Ascending aorta (tissue), 2 donors: ENCODE measurements at regions of chr1 and their contacts with region 1.

Region 1: GRCh38 chr1:228486596-228487335 is 416 bp upstream of the RNF187 start:
- DNase-seq: peak; percentile 14 to 82
- H3K4me3 ChIP-seq: peak overlapping the region; percentile 76 to 97
- H3K27ac ChIP-seq: peak overlapping the region; percentile 99 to 100
- H3K4me1 ChIP-seq: peaks cover 17 to 28% of the 10 kb centered on the region in 2 donors
- H3K27me3 ChIP-seq: no peaks in the 10 kb centered on the region
- CTCF ChIP-seq: no peak

Region 2: DNA sequence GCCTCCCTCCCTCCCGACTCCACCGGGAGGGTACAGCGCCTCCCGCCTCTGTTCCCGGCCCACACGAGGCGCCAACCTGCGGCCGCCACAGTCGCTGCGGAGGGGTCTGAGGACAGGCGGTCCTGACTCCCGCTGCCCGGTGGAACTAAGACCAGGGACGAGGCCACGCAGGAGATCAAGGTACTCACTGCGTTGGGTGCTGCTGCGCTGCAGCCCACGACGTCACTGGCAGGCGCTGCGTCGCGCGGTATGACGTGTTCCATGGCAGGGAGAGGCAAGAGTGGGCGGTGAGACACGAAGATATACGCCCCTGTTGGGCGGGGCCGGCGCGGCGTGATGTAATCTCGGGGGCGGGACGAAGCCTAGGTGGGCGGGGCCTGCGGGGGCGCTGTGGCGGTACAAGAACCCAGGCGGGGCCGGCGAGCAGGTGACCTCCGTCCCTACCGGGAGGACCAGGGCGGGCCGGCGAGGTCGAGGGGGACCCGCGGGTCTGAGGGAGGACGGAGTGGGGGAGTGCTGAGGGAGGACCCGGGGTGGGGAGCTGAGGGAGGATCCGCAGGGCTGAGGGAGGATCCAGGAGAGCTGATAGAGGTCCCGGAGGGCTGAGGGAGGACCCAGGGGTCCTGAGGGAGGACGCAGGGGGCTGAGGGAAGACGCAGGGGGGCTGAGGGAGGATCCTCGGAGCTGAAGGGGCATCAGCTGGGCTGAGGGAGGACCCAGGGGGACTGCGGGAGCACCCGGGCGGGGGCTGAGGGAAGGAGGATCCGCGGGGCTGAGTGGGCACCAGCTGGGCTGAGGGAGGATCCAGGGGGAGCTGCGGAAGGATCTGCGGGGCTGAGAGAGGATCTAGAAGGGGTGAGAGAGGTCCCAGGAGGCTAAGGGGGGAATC is 377.4 kb before region 1 on chr1 and contains the start of gene MRPL55:
- intact Hi-C with region 1: loop called (anchors 10 kb)
- DNase-seq: peak; percentile 94 to 99
- H3K4me3 ChIP-seq: peak within 1 kb of the TSS; percentile 77 to 97
- H3K27ac ChIP-seq: peak within 1 kb of the TSS; percentile 88 to 89
- H3K4me1 ChIP-seq: peaks cover 14 to 18% of the 10 kb centered on the region in 2 donors
- H3K27me3 ChIP-seq: no peaks in the 10 kb centered on the region
- CTCF ChIP-seq: peak in 1 of 3 experiments; percentile 9
- total RNA-seq, gene MRPL55: 23.6 TPM

Region 3: DNA sequence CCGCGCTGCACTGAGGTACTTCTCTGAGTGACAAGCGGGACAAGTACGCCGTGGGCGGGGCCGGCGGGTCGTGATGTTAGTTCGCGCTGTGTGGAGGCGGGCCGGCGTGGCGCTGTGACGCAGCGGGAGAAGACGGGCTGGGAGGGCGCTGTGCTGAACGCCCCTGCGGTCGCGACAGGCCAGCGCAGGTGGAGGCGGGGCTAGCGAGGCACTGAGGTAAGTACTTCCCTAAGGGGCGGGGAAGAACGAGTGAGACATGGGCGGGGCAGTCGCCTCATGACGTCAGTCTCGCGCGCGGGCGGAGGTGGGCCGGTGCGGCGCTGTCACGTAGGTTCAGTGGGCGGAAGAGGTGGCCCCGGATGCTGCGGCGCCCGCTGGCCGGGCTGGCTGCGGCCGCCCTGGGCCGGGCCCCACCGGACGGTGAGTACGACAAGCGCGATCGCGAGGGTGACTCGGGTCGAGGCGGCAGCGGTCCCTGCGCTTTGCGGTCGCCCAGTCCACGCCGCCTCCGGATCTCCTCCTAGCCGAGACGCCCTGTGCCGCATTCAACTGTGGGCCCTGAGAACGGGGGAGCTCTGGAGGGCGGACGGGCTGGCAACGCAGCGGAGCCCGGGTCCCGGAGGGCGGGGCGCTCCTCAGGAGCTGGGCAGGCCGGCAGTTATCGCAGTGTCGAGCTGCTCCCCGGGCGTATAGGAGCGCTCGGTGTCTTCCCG is 346.7 kb before region 1 on chr1 and contains the start of gene GUK1:
- intact Hi-C with region 1: loop called (anchors 2 kb)
- DNase-seq: peak; percentile 100
- H3K4me3 ChIP-seq: peak within 1 kb of the TSS; percentile 79 to 92
- H3K27ac ChIP-seq: peak within 1 kb of the TSS; percentile 90 to 96
- H3K4me1 ChIP-seq: peaks cover 18 to 34% of the 10 kb centered on the region in 2 donors
- H3K27me3 ChIP-seq: no peaks in the 10 kb centered on the region
- CTCF ChIP-seq: peak in 1 of 3 experiments; percentile 17
- total RNA-seq, gene GUK1: 979 TPM

Region 4: DNA sequence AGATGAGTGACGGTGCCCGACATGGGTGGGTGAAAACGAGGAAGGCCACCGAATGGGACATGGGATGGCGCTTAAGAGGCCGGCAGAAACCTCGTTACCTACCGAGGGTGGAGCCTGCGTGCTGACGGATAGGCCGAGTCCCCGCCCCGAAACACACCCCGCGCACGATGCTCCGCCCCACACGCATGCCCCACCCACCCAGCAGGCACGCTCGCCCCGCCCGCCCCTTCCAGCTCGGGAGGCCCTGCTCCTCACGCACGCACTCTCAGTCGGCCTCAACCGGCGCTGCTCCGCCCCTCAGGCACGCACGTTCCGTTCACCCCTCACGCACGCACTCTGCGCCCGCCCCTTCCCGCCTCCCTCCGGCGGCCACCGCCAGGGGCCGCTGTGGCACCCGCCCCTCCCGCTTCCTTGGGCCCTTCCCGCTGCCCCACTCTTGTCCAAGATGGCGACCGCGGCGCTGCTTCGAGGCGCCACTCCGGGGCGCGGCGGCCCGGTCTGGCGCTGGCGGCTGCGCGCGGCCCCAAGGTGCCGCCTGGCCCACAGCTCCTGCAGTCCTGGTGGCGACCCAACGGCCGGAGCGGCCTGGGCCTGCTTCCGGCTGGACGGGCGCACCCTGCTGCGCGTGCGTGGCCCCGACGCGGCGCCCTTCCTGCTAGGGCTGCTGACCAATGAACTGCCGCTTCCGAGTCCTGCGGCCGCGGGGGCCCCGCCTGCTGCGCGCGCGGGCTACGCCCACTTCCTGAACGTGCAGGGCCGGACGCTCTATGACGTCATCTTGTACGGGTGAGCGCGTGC is 321.2 kb before region 1 on chr1 and contains the start of gene IBA57:
- intact Hi-C with region 1: loop called (anchors 1 kb)
- DNase-seq: peak; percentile 96 to 99
- H3K4me3 ChIP-seq: peak within 1 kb of the TSS; percentile 80 to 91
- H3K27ac ChIP-seq: peak within 1 kb of the TSS; percentile 94 to 98
- H3K4me1 ChIP-seq: peaks cover 0 to 11% of the 10 kb centered on the region in 2 donors
- H3K27me3 ChIP-seq: no peaks in the 10 kb centered on the region
- CTCF ChIP-seq: peak; percentile 84 to 97 (median 87)
- total RNA-seq, gene IBA57: 55.6 TPM

Region 5: GRCh38 chr1:228457396-228458176 is 29.2 kb before region 1 on chr1:
- intact Hi-C with region 1: loop called (anchors 2 kb)
- DNase-seq: peak; percentile 75 to 91
- H3K4me3 ChIP-seq: peak overlapping the region; percentile 60 to 75
- H3K27ac ChIP-seq: peak overlapping the region; percentile 73 to 79
- H3K4me1 ChIP-seq: peaks cover 5 to 8% of the 10 kb centered on the region in 2 donors
- H3K27me3 ChIP-seq: peaks cover 6% of the 10 kb centered on the region
- CTCF ChIP-seq: peak in 2 of 3 experiments; percentile 9 to 35

Region 6: GRCh38 chr1:229270547-229271447 is 784.0 kb after region 1 on chr1 and contains the start of gene RAB4A:
- intact Hi-C with region 1: loop called (anchors 10 kb)
- DNase-seq: peak; percentile 40 to 89
- H3K4me3 ChIP-seq: peak within 1 kb of the TSS; percentile 77 to 97
- H3K27ac ChIP-seq: peak within 1 kb of the TSS; percentile 84
- H3K4me1 ChIP-seq: peaks cover 8 to 34% of the 10 kb centered on the region in 2 donors
- H3K27me3 ChIP-seq: no peaks in the 10 kb centered on the region
- CTCF ChIP-seq: no peak
- total RNA-seq, gene RAB4A: 6.0 TPM